Calu3 (cell line): ENCODE measurements at regions of chr7 and their contacts with region 1.

Region 1: GRCh38 chr7:150420987-150421674 is 29.3 kb upstream of the GIMAP8 start:
- DNase-seq: peak; percentile 88
- H3K4me3 Mint-ChIP-seq: no peak overlapping the region
- H3K27ac Mint-ChIP-seq: no peak overlapping the region
- H3K4me1 Mint-ChIP-seq: peaks cover 11% of the 10 kb centered on the region
- H3K27me3 Mint-ChIP-seq: peaks cover 12% of the 10 kb centered on the region
- CTCF ChIP-seq: peak; percentile 52

Region 2: DNA sequence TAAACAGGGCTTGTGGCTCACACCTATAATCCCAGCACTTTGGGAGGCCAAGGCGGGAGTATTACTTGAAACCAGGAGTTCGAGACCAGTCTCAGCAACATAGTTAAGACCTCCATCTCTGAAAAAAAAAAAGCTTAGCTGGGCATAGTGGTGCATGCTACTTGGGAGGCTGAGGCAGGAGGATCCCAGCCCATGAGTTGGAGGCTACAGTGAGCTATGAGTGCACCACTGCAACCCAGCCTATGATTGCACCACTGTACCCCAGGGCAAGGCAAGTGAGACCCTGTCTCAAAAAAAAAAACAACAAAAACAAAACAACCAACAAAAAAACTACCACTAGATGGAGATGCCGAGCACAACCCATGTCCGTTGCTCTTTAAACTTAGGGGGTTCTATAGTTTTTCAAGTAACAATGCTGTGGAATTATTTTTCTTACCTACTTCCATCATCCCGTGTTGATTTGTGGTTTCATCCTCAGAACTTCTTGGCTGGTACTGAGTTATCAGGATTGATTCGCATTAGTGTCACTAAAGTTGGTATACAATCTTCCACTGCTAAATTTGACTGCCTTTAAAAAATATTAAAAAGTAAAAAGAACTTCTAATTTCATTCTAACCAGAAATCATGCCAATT is 64.8 kb before region 1 on chr7:
- CTCF ChIA-PET with region 1: no interaction called
- intact Hi-C with region 1: loop called (anchors 1 kb)
- DNase-seq: no peak
- H3K4me3 Mint-ChIP-seq: no peak overlapping the region
- H3K27ac Mint-ChIP-seq: no peak overlapping the region
- H3K4me1 Mint-ChIP-seq: peaks cover 27% of the 10 kb centered on the region
- H3K27me3 Mint-ChIP-seq: no peaks in the 10 kb centered on the region
- CTCF ChIP-seq: peak; percentile 74

Region 3: GRCh38 chr7:150586785-150587152 is 165.6 kb after region 1 on chr7:
- CTCF ChIA-PET with region 1: no interaction called
- intact Hi-C with region 1: no loop called
- DNase-seq: no peak
- H3K4me3 Mint-ChIP-seq: no peak overlapping the region
- H3K27ac Mint-ChIP-seq: no peak overlapping the region
- H3K4me1 Mint-ChIP-seq: peaks cover 13% of the 10 kb centered on the region
- H3K27me3 Mint-ChIP-seq: peaks cover 15% of the 10 kb centered on the region
- CTCF ChIP-seq: no peak

Region 4: DNA sequence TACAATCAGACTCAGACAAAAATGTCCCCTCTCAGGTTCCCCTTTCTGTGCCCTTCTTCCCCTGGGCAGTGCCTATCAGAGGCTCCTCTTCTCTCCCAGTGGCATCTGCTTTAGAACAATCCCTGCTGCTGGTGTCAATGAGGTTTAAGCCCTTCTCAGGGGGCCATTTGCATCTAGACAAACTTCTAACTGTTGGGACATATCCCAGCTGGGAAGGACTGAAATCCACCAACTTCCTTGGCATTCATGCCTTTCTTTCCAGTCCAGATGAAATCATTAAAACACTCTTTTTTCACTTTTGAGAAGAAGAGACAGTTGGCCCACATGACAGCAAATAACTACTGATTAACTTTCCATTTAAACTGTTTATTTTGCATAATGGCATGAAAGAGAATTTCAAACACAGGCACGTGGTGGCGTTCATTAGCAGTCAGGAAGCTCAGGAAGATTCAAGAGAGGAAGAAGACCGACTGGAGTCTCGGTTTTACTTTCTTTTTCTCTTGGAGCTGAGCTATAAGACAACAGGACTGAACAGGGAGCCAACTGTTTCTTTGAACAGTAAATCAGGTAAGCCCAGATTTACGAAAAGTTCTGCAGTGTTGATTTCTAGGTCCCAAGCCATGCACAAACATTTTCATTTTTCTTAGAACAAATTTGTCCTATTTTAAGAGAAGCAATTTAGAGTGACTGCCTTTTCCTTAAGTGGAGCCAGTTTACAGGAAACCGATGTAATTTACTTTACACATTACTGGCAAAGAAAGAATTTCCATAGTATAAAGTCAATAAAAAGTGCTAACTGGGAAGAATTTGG is 264.3 kb after region 1 on chr7 and contains the start of gene GIMAP2:
- CTCF ChIA-PET with region 1: no interaction called
- intact Hi-C with region 1: no loop called
- DNase-seq: no peak
- H3K4me3 Mint-ChIP-seq: peak within 1 kb of the TSS; percentile 55
- H3K27ac Mint-ChIP-seq: peak within 1 kb of the TSS; percentile 60
- H3K4me1 Mint-ChIP-seq: peaks cover 8% of the 10 kb centered on the region
- H3K27me3 Mint-ChIP-seq: no peaks in the 10 kb centered on the region
- CTCF ChIP-seq: no peak
- total RNA-seq, gene GIMAP2: 3.9 and 4.7 TPM in 2 replicates